ENCODE measurements at regions of chr5 and their contacts with region 1.

Region 1: DNA sequence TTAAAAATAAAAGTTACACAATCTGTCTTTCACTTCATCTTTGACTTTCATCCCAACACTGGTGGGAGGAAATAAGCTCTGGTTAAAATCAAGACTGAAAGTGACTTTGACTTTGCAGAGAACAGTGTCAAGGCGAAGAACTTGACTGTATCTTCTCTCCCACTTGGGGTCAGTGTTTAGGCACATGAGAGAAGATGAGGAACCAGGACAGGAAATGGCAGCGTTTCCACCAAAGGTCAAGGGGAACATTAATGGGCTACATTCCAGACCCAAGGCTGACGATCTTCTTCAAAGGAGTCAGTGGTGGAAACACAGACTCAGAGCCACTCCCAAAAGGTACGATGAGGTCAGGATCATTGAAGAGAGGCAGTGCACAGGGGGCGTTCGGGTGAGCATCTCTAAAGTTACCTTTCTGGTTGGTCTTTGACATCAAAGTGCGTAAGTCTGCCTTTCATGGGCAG is 409.6 kb downstream of the ARHGEF28 start:
- DNase-seq: peak in 1 of 2 donors; percentile 81
- H3K4me3 ChIP-seq: no peak overlapping the region
- H3K27ac ChIP-seq: no peak overlapping the region
- H3K4me1 ChIP-seq: peaks cover 0 to 13% (median 3%) of the 10 kb centered on the region in 4 donors
- H3K27me3 ChIP-seq: no peaks in the 10 kb centered on the region
- CTCF ChIP-seq: peak in 2 of 7 experiments; percentile 19 to 28
- EP300 ChIP-seq: no peak
- POLR2A ChIP-seq: no peak

Region 2: GRCh38 chr5:73853091-73853490 is 182.5 kb before region 1 on chr5:
- intact Hi-C with region 1: no loop called
- DNase-seq: no peak
- H3K4me3 ChIP-seq: no peak overlapping the region
- H3K27ac ChIP-seq: no peak overlapping the region
- H3K4me1 ChIP-seq: peaks cover 0 to 12% (median 0%) of the 10 kb centered on the region in 4 donors
- H3K27me3 ChIP-seq: no peaks in the 10 kb centered on the region
- CTCF ChIP-seq: no peak
- EP300 ChIP-seq: no peak
- POLR2A ChIP-seq: no peak

Region 3: GRCh38 chr5:74640450-74640953 is 605.0 kb after region 1 on chr5 and contains the start of gene ENC1:
- intact Hi-C with region 1: loop called (anchors 10 kb)
- DNase-seq: peak; percentile 88 to 97
- H3K4me3 ChIP-seq: peak within 1 kb of the TSS; percentile 51 to 80 (median 72)
- H3K27ac ChIP-seq: peak within 1 kb of the TSS; percentile 82 to 94 (median 91)
- H3K4me1 ChIP-seq: peaks cover 18 to 70% (median 51%) of the 10 kb centered on the region in 4 donors
- H3K27me3 ChIP-seq: no peaks in the 10 kb centered on the region
- CTCF ChIP-seq: peak in 5 of 7 experiments; percentile 50 to 81 (median 68)
- EP300 ChIP-seq: no peak
- POLR2A ChIP-seq: no peak
- total RNA-seq, gene ENC1: 3.5 to 136 (median 57.5) TPM

Measured in stomach (tissue), 19 donors.